Heart left ventricle (tissue), 16 donors: ENCODE measurements at regions of chr11 and their contacts with region 1.

Region 1: DNA sequence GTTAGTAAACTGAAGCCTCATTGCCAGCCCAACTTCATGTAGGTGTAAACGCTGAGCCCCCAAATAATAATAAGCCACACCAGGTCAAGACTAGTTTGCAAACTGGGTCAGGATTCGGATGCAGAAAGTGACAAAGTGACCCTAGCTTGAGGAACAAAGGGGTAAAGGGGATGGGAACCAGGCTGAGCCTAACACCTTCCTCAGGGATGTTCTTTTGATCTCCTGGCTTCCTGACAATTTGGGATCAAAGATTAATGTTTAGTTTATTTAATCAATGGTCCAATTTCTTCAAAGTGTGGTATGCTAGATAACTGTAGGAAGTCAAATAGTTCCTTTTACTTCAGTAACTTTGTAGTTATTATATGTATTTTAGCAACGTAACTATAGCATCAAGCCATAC is 9.9 kb downstream of the GLYATL1 start:
- DNase-seq: no peak
- ATAC-seq: no peak
- H3K4me3 ChIP-seq: no peak overlapping the region
- H3K27ac ChIP-seq: no peak overlapping the region
- H3K4me1 ChIP-seq: no peaks in the 10 kb centered on the region
- H3K27me3 ChIP-seq: no peaks in the 10 kb centered on the region
- CTCF ChIP-seq: no peak
- POLR2A ChIP-seq: no peak

Region 2: DNA sequence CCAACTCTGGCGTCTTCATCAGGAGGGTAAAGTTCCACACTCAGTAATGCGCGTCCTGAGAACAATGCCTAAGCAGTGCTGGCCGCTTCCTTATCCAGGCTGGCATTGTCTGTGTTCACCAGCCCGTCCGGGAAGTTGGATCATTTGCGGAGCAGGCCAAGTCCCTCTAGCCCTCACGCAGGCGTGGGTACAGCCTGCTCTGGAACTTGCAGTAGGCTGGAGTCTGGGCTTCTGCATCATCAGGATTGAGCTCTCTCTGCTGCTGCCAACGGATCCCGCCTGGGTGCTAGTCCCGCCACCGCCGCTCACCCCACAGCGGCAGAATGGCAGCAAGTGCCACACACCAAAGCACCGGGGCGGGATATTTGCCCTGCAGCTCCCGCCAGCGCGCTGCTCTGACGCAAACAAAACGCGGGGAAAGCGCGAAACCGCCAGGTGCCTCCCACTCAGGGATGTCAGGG is 19.1 kb after region 1 on chr11:
- intact Hi-C with region 1: loop called in 1 of 10 experiments (anchors 2 kb)
- DNase-seq: peak in 1 of 5 donors; percentile 48
- ATAC-seq: no peak
- H3K4me3 ChIP-seq: no peak overlapping the region
- H3K27ac ChIP-seq: no peak overlapping the region
- H3K4me1 ChIP-seq: no peaks in the 10 kb centered on the region
- H3K27me3 ChIP-seq: peaks cover 0 to 38% (median 15%) of the 10 kb centered on the region in 9 donors
- CTCF ChIP-seq: no peak
- POLR2A ChIP-seq: no peak